K562 (cell line): ENCODE measurements at regions of chr5 and their contacts with region 1.

Region 1: GRCh38 chr5:157743163-157744050 is at the start of gene LSM11:
- DNase-seq: peak; percentile 92 to 95 (median 94)
- ATAC-seq: peak; percentile 95
- H3K4me3 ChIP-seq: peak within 1 kb of the TSS; percentile 72
- H3K27ac ChIP-seq: peak within 1 kb of the TSS; percentile 59; the same call in 2 of the 3 replicates
- H3K4me1 ChIP-seq: peaks cover 19 to 27% of the 10 kb centered on the region in 2 experiments; a peak in 4 of 5 replicates
- H3K27me3 ChIP-seq: no peaks in the 10 kb centered on the region
- CTCF ChIP-seq: peak; percentile 99 to 100 (median 100)
- EP300 ChIP-seq: no peak
- POLR2A ChIP-seq: 0 out of 2 replicates have a peak, but pooled peaks have one; percentile 34
- RAD21 ChIP-seq: peak; percentile 97
- polyA plus RNA-seq, gene LSM11: 1.8 to 2.6 TPM

Region 2: GRCh38 chr5:157253547-157253946 is 489.9 kb before region 1 on chr5:
- CTCF ChIA-PET with region 1: interaction called, 10 read pairs
- POLR2A ChIA-PET with region 1: no interaction called
- in situ Hi-C with region 1: no loop called
- intact Hi-C with region 1: no loop called
- DNase-seq: peak; percentile 41 to 66 (median 59)
- ATAC-seq: peak; percentile 87
- H3K4me3 ChIP-seq: no peak overlapping the region
- H3K27ac ChIP-seq: no peak overlapping the region
- H3K4me1 ChIP-seq: no peaks in the 10 kb centered on the region
- H3K27me3 ChIP-seq: peaks cover 0 to 5% of the 10 kb centered on the region in 2 experiments; a peak in 1 of 5 replicates
- CTCF ChIP-seq: peak; percentile 73 to 91 (median 80)
- EP300 ChIP-seq: no peak
- POLR2A ChIP-seq: no peak
- RAD21 ChIP-seq: peak; percentile 90 to 93

Region 3: GRCh38 chr5:157366741-157367674 is 376.4 kb before region 1 on chr5:
- CTCF ChIA-PET with region 1: interaction called, 18 read pairs
- POLR2A ChIA-PET with region 1: no interaction called
- in situ Hi-C with region 1: no loop called
- intact Hi-C with region 1: no loop called
- DNase-seq: peak; percentile 19 to 39 (median 24)
- ATAC-seq: peak; percentile 82
- H3K4me3 ChIP-seq: no peak overlapping the region
- H3K27ac ChIP-seq: no peak overlapping the region
- H3K4me1 ChIP-seq: peaks cover 0 to 8% of the 10 kb centered on the region in 2 experiments; a peak in 4 of 5 replicates
- H3K27me3 ChIP-seq: 0 out of 5 replicates have a peak, but pooled peaks cover 0 to 8% of the 10 kb centered on the region in 2 experiments
- CTCF ChIP-seq: peak; percentile 48 to 66 (median 57); a peak in 4 of 6 replicates
- EP300 ChIP-seq: no peak
- POLR2A ChIP-seq: no peak
- RAD21 ChIP-seq: peak; percentile 28 to 60; a peak in 3 of 4 replicates

Region 4: DNA sequence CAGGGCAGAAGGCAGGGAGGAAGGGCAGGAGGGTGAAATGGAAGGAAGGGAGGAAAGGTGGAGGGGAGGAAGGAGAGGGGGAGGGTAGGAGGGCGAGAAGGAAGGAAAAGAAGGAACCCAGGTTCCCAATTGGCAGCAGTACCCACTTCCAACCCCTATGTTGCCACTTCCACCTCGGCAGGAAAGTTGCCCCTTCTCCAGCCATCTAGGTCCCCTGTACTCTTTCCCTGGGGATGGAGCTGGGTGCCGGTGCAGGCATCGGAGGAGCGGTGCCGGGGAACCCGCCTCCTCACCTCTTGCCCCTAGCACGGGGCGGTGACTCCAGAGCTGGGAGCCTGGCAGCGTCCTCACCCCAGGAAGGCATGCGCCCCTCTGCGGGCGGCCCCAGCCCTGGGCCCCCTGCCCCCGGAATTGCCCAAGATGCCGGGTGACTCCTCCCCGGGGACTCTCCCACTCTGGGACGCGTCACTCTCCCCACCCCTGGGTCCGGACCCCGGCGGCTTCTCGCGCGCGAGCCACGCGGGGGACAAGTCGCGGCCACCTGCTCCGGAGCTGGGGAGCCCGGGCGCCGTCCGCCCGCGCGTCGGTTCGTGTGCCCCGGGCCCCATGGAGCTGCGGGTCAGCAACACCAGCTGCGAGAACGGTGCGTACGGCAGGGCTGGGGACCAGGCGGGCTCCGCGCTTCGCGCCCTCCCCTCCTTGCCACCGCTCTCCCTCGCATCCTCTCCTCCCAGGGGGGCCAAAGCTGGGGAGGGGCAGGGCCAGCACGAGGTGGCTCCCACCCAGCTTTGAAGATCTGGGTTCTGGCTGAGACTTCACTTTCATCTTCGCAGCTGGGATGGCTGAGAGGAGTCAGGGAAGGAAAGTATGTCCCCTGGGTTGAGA is 283.4 kb before region 1 on chr5 and contains the start of gene NIPAL4:
- CTCF ChIA-PET with region 1: no interaction called
- POLR2A ChIA-PET with region 1: no interaction called
- in situ Hi-C with region 1: no loop called
- intact Hi-C with region 1: no loop called
- DNase-seq: no peak
- ATAC-seq: no peak
- H3K4me3 ChIP-seq: no peak within 1 kb of the TSS
- H3K27ac ChIP-seq: no peak within 1 kb of the TSS
- H3K4me1 ChIP-seq: peaks cover 5 to 7% of the 10 kb centered on the region in 2 experiments; a peak in 3 of 5 replicates
- H3K27me3 ChIP-seq: peaks cover 26 to 42% of the 10 kb centered on the region in 2 experiments
- CTCF ChIP-seq: no peak
- EP300 ChIP-seq: no peak
- POLR2A ChIP-seq: no peak
- RAD21 ChIP-seq: no peak
- polyA plus RNA-seq, gene NIPAL4: not detected

Region 5: GRCh38 chr5:157669701-157670097 is 73.7 kb before region 1 on chr5:
- CTCF ChIA-PET with region 1: interaction called, 32 read pairs
- POLR2A ChIA-PET with region 1: interaction called, 5 read pairs
- in situ Hi-C with region 1: no loop called
- intact Hi-C with region 1: loop called (anchors 1 kb)
- DNase-seq: no peak
- ATAC-seq: no peak
- H3K4me3 ChIP-seq: no peak overlapping the region
- H3K27ac ChIP-seq: no peak overlapping the region
- H3K4me1 ChIP-seq: peaks cover 0 to 10% of the 10 kb centered on the region in 2 experiments; a peak in 1 of 5 replicates
- H3K27me3 ChIP-seq: peaks cover 0 to 25% of the 10 kb centered on the region in 2 experiments; a peak in 2 of 5 replicates
- CTCF ChIP-seq: no peak
- EP300 ChIP-seq: no peak
- POLR2A ChIP-seq: no peak
- RAD21 ChIP-seq: no peak

Region 6: DNA sequence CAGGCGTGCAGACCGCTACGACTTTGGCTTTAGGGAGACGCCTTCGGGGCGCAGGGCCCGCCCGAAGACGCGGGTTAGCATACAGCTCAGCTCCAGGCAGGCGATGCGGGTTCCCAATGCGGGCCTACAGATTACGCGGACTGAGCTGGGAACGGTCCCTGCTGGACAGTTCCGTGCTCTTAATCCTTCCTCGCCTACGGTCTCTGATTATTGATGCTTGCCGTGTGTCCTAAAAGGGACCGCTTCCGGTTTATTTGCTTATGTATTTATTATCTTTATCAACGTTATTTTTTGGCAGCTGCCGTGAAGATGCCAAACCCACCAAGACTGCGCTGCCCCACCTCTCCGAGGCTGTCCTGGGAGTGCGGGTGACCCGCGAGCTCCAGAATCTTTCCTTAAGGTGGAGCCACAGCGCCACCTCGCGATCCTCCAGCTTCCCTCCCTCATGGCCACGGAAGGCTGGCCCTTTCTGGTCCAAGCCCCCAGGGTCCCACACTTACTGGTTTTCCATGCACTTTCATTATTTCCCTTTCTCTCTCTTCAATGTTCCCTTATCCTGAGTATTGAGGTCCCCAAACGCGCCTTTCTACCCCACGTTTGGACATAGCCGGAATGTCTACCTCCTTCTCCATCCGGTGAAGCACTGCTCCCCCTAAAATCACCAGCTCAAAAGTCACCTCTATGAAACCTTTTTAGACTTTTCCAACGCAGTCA is 1363.3 kb after region 1 on chr5:
- CTCF ChIA-PET with region 1: no interaction called
- POLR2A ChIA-PET with region 1: no interaction called
- in situ Hi-C with region 1: no loop called
- intact Hi-C with region 1: loop called (anchors 10 kb)
- DNase-seq: peak; percentile 73 to 79 (median 76)
- ATAC-seq: peak; percentile 96
- H3K4me3 ChIP-seq: no peak overlapping the region
- H3K27ac ChIP-seq: no peak overlapping the region
- H3K4me1 ChIP-seq: peaks cover 0 to 9% of the 10 kb centered on the region in 2 experiments; a peak in 1 of 5 replicates
- H3K27me3 ChIP-seq: peaks cover 20 to 26% of the 10 kb centered on the region in 2 experiments
- CTCF ChIP-seq: peak; percentile 82 to 88 (median 87)
- EP300 ChIP-seq: no peak
- POLR2A ChIP-seq: no peak
- RAD21 ChIP-seq: peak; percentile 86 to 91